ENCODE measurements at regions of chr10 and their contacts with region 1.

Region 1: GRCh38 chr10:123994417-123995081 is 98.8 kb downstream of the CHST15 start:
- DNase-seq: peak; percentile 89
- H3K4me3 Mint-ChIP-seq: peak overlapping the region; percentile 75
- H3K27ac Mint-ChIP-seq: no peak overlapping the region
- H3K4me1 Mint-ChIP-seq: peaks cover 42% of the 10 kb centered on the region
- H3K27me3 Mint-ChIP-seq: peaks cover 27% of the 10 kb centered on the region
- CTCF ChIP-seq: peak; percentile 96

Region 2: DNA sequence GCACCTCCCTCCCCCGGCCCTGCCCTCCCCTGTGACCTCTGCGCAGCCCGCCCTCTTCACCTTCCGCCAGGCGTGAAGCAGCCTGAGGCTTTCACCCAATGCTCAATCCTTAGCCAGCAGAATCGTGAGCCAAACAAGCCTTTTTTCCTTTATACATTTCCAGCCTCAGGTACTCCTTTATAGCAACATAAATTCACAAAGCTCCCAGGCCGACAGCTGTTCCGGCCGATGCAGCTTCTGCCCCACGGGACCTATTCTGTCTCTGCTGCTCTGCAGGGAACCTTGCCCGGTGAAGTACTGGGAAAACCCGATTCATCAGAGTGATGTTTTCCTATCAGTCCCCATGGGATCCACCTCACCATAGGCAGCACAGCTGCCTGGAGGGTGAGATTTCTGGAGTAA is 11.4 kb after region 1 on chr10:
- CTCF ChIA-PET with region 1: interaction called, 20 read pairs
- POLR2A ChIA-PET with region 1: no interaction called
- intact Hi-C with region 1: no loop called
- DNase-seq: no peak
- H3K4me3 Mint-ChIP-seq: no peak overlapping the region
- H3K27ac Mint-ChIP-seq: no peak overlapping the region
- H3K4me1 Mint-ChIP-seq: peaks cover 9% of the 10 kb centered on the region
- H3K27me3 Mint-ChIP-seq: no peaks in the 10 kb centered on the region
- CTCF ChIP-seq: no peak

Region 3: DNA sequence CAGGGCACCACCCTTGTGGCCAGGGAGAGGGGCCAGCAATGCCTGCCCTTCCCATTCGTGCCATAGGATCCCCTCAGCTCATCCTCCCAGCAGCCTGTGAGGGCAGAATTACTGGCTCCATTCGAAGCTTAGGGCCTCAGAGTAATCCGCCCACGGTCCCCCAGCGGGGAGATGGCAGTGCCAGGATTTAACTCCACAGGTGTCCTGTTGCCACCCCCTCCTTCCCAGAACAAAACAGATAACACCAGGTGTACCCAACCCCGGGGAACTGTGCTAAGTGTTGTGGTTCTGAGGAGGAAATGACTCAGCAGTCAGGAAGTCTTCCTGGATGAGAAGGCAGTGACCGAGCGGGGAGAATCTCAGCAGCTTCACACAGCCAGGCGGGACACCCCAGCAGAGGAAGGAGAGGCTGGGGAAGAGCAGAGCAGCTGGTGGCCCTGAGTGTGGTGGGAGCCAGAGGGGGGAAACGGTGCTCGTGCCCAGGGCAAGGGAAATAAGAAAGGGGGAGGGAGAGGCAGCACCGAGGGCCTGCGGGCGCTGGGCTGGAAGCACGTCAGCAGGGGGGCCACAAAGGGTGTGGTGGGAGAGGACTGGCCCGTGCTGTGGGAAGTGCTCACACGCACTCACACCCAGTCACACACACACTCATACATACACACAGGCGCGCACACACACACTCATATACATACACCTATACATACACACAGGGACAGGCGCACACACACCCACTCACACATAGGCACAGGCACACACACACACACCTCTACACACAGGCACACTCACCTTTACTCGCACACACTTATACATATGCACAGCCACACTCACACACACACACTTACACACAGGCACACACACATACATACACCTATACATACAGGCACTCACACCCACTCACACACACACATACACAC is 158.6 kb after region 1 on chr10:
- CTCF ChIA-PET with region 1: interaction called, 6 read pairs
- POLR2A ChIA-PET with region 1: interaction called, 16 read pairs
- intact Hi-C with region 1: loop called (anchors 1 kb)
- DNase-seq: peak; percentile 99
- H3K4me3 Mint-ChIP-seq: no peak overlapping the region
- H3K27ac Mint-ChIP-seq: no peak overlapping the region
- H3K4me1 Mint-ChIP-seq: peaks cover 11% of the 10 kb centered on the region
- H3K27me3 Mint-ChIP-seq: no peaks in the 10 kb centered on the region
- CTCF ChIP-seq: no peak

Region 4: DNA sequence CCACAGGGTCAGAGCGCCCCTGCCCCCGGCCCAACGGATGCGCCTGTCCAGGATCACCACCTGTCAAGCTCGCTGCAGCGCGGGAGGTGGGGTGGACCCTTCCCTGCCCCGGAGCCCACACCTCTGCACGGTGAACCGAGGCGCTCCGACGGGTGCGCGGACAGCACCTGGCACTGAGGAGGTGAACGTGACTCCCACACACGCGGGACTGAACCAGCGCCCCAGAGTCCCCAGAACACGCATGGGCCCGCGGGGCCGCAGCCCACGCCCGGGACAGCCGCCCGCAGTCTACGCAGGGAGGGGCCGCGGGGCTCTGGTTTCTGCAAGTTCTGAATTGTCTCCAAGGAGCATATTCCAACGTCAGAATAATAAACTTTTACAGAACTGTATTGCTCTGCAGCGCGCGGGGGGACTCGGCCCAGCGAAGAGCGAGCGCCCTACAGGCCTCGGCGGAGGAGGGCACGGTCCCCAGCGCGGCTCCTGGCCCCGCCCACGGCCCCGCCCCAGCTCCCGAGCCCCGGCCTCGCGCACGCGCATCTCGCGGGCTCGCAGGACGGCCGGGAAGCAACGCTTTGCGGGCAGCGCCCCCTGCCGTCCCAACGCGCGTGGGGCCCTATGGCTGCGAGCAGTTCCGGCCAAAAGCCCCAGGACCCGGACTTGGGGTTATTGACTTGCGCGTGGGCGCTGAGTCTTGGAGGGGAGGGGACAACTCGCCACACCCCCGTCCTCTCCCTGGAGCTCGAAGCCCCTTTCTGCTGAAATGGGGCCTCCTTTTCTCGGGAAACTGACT is 394.5 kb after region 1 on chr10:
- CTCF ChIA-PET with region 1: interaction called, 306 read pairs
- POLR2A ChIA-PET with region 1: interaction called, 52 read pairs
- intact Hi-C with region 1: loop called (anchors 1 kb)
- DNase-seq: peak; percentile 83
- H3K4me3 Mint-ChIP-seq: no peak overlapping the region
- H3K27ac Mint-ChIP-seq: no peak overlapping the region
- H3K4me1 Mint-ChIP-seq: no peaks in the 10 kb centered on the region
- H3K27me3 Mint-ChIP-seq: no peaks in the 10 kb centered on the region
- CTCF ChIP-seq: peak; percentile 92

Region 5: GRCh38 chr10:124418726-124419501 is 424.4 kb after region 1 on chr10 and contains the start of gene OAT:
- CTCF ChIA-PET with region 1: interaction called, 15 read pairs
- POLR2A ChIA-PET with region 1: interaction called, 24 read pairs
- intact Hi-C with region 1: no loop called
- DNase-seq: peak; percentile 97
- H3K4me3 Mint-ChIP-seq: peak within 1 kb of the TSS; percentile 78
- H3K27ac Mint-ChIP-seq: peak within 1 kb of the TSS; percentile 81
- H3K4me1 Mint-ChIP-seq: peaks cover 31% of the 10 kb centered on the region
- H3K27me3 Mint-ChIP-seq: no peaks in the 10 kb centered on the region
- CTCF ChIP-seq: no peak
- total RNA-seq, gene OAT: 62.2 and 68.1 TPM in 2 replicates

Measured in MCF 10A (cell line).